ENCODE measurements at regions of chr1 and their contacts with region 1.

Region 1: GRCh38 chr1:145845514-145846161 is at the start of gene NUDT17:
- DNase-seq: peak; percentile 38 to 93
- H3K4me3 ChIP-seq: peak within 1 kb of the TSS; percentile 43 to 77 (median 66)
- H3K27ac ChIP-seq: peak within 1 kb of the TSS; percentile 51; the same call in 1 of the 2 replicates
- H3K4me1 ChIP-seq: peaks cover 0 to 8% (median 0%) of the 10 kb centered on the region in 4 experiments; a peak in 2 of 7 replicates
- H3K27me3 ChIP-seq: no peaks in the 10 kb centered on the region
- CTCF ChIP-seq: peak; percentile 85 to 93 (median 88)
- EP300 ChIP-seq: no peak
- POLR2A ChIP-seq: peak in 1 of 2 experiments; percentile 79; a peak in 2 of 3 replicates
- RAD21 ChIP-seq: peak; percentile 40 to 59; a peak in 3 of 4 replicates
- total RNA-seq, gene NUDT17: 2.7 and 2.8 TPM in 2 replicates

Region 2: DNA sequence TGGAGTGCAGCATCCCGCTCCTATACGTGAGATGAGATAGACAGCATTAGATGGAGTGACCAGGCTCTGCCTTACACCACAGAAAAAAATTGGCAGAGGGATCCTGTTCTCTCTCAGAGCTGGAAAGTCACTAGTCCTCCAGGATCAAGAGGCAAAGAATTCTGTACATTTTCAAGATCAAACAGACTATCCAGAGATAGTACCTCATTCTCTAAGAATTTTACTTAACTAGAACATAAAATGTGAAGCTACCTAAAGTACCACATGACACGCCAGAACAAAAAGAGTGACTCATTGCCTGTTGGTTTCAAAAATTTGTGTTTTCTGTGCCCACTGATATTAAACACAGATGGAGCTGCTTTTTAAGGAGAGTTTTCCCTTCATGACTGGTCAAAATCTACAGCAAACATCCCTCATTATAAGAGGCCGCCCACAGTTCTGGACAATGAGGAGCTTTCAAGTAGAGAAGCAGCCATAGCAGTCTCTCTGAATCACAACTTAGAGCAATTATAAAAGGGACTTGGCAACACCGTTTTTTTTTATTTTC is 94.1 kb before region 1 on chr1:
- CTCF ChIA-PET with region 1: no interaction called
- POLR2A ChIA-PET with region 1: no interaction called
- DNase-seq: no peak
- H3K4me3 ChIP-seq: no peak overlapping the region
- H3K27ac ChIP-seq: no peak overlapping the region
- H3K4me1 ChIP-seq: no peaks in the 10 kb centered on the region
- H3K27me3 ChIP-seq: no peaks in the 10 kb centered on the region
- CTCF ChIP-seq: no peak
- EP300 ChIP-seq: no peak
- POLR2A ChIP-seq: no peak
- RAD21 ChIP-seq: no peak

Region 3: DNA sequence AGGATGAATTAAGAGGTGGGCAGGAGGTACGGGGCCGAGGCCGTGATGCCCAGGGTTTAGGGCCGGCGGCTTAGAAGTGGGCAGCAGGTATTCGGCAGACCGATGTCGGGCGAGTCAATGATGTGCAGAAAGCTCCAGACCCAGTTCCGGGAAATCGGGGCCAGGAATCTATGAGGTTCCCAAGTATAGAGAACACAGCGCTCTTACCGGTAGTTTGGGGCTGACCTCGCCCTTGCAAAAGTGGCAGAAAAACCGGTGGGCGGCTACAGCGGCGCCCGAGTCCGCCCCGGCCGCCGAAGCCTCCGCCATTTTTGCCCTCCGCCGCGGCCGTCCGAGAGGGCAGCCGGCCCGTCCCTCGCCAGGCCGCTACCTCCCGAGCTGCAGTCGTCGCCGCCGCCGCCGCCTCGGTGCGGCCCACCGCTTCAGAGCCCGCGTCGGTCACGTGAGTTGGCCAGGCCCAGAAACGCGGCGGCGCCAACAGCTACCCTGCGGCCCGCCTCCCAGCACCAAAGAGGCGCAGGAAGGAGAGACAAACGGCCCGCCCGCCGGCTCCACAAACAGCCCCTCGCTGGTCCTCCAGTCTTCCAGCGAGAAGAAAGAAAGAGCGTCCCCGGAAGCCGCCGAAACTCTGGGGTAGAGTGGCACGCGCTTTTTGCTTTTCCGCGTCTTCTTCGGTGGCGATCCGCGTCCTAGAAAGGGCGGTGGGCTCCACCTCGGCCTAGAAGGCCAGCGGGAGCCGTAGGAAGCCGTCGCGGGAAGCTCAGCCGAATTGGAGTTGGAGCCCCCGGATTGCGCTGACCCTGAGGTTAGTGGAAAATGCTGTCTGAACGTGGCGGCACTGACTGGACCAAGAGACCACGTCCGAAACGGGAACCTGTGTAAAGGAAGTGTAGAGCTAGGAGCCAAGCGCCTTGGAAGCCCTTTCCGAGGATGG is 21.8 kb before region 1 on chr1 and contains the starts of genes POLR3C and RNF115:
- CTCF ChIA-PET with region 1: interaction called, 109 read pairs
- POLR2A ChIA-PET with region 1: interaction called, 20 read pairs
- DNase-seq: peak; percentile 62 to 88
- H3K4me3 ChIP-seq: peak within 1 kb of the TSS; percentile 75 to 100 (median 98)
- H3K27ac ChIP-seq: peak within 1 kb of the TSS; percentile 91
- H3K4me1 ChIP-seq: peaks cover 0 to 4% (median 0%) of the 10 kb centered on the region in 4 experiments; a peak in 1 of 7 replicates
- H3K27me3 ChIP-seq: no peaks in the 10 kb centered on the region
- CTCF ChIP-seq: no peak
- EP300 ChIP-seq: peak in 1 of 2 experiments; percentile 33; a peak in 1 of 3 replicates
- POLR2A ChIP-seq: peak in 1 of 2 experiments; percentile 69; a peak in 2 of 3 replicates
- RAD21 ChIP-seq: no peak
- total RNA-seq, gene POLR3C: 26.2 and 26.8 TPM in 2 replicates
- total RNA-seq, gene RNF115: 10.2 and 10.8 TPM in 2 replicates

Region 4: DNA sequence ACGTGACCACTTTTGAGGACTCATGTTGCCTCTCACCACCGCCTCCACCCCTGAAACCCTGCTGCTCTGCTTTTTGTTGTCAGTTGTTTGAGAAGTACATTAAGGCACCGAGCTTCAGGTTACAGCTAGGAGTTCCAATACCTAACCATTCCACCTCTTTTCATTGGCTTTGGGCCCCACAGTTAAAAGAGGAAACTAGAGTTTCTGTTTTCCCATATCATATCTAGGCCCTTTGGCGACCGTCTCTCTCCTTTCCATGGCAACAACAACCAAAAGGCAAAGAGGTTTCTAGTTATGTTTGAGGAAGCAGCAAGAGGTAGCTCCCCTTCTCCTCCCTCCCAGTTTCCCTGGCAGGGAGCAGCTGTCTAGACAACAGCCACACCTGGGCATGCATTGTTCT is 34.1 kb after region 1 on chr1:
- CTCF ChIA-PET with region 1: interaction called, 42 read pairs
- POLR2A ChIA-PET with region 1: interaction called, 3 read pairs
- DNase-seq: no peak
- H3K4me3 ChIP-seq: no peak overlapping the region
- H3K27ac ChIP-seq: no peak overlapping the region
- H3K4me1 ChIP-seq: peaks cover 0 to 10% (median 6%) of the 10 kb centered on the region in 4 experiments; a peak in 4 of 7 replicates
- H3K27me3 ChIP-seq: peaks cover 0 to 12% (median 8%) of the 10 kb centered on the region in 4 experiments; a peak in 6 of 7 replicates
- CTCF ChIP-seq: no peak
- EP300 ChIP-seq: no peak
- POLR2A ChIP-seq: no peak
- RAD21 ChIP-seq: no peak

Region 5: GRCh38 chr1:145901318-145902021 is 55.8 kb after region 1 on chr1:
- CTCF ChIA-PET with region 1: interaction called, 66 read pairs
- POLR2A ChIA-PET with region 1: interaction called, 3 read pairs
- DNase-seq: no peak
- H3K4me3 ChIP-seq: no peak overlapping the region
- H3K27ac ChIP-seq: no peak overlapping the region
- H3K4me1 ChIP-seq: no peaks in the 10 kb centered on the region
- H3K27me3 ChIP-seq: no peaks in the 10 kb centered on the region; a peak in 1 of 7 replicates
- CTCF ChIP-seq: peak; percentile 47 to 56 (median 49)
- EP300 ChIP-seq: no peak
- POLR2A ChIP-seq: no peak
- RAD21 ChIP-seq: peak in 1 of 2 experiments; percentile 39; a peak in 2 of 4 replicates

Region 6: GRCh38 chr1:145957443-145958319 is 112.0 kb after region 1 on chr1 and contains the start of gene LIX1L:
- CTCF ChIA-PET with region 1: interaction called, 12 read pairs
- POLR2A ChIA-PET with region 1: no interaction called
- DNase-seq: peak; percentile 83 to 93
- H3K4me3 ChIP-seq: peak within 1 kb of the TSS; percentile 42 to 67 (median 52)
- H3K27ac ChIP-seq: no peak within 1 kb of the TSS
- H3K4me1 ChIP-seq: peaks cover 0 to 15% (median 9%) of the 10 kb centered on the region in 4 experiments; a peak in 6 of 7 replicates
- H3K27me3 ChIP-seq: peaks cover 17 to 66% (median 52%) of the 10 kb centered on the region in 4 experiments
- CTCF ChIP-seq: no peak
- EP300 ChIP-seq: no peak
- POLR2A ChIP-seq: no peak
- RAD21 ChIP-seq: no peak; a peak in 1 of 4 replicates
- total RNA-seq, gene LIX1L: 2.9 and 3.0 TPM in 2 replicates

Region 7: DNA sequence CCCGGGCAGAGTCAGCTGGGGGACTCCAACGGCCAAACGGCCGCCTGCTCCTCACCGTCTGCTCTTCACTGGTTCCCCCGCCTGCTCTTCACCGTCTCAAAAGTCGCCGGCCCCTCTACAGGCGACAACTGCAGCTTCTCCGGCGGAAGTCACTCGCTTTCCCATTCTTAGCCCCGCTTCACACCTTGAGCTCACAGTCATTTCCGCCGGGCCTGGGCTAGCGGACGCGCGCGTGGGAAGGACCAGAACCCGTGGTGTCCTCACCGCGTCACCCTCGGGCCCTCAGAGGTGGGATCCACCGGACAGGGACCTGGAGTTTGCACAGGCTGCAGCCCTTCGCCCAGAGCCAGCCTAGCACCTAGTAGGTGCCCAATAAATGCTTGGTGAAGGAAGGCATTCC is 203.8 kb after region 1 on chr1:
- CTCF ChIA-PET with region 1: no interaction called
- POLR2A ChIA-PET with region 1: interaction called, 13 read pairs
- DNase-seq: no peak
- H3K4me3 ChIP-seq: no peak overlapping the region
- H3K27ac ChIP-seq: no peak overlapping the region
- H3K4me1 ChIP-seq: no peaks in the 10 kb centered on the region
- H3K27me3 ChIP-seq: no peaks in the 10 kb centered on the region
- CTCF ChIP-seq: no peak
- EP300 ChIP-seq: no peak
- POLR2A ChIP-seq: no peak
- RAD21 ChIP-seq: no peak

Measured in H1 (cell line).